Activated B cell treated with CpG ODN at 0.5 μM for 24 hours (primary cell): ENCODE measurements at regions of chr16 and their contacts with region 1.

Region 1: DNA sequence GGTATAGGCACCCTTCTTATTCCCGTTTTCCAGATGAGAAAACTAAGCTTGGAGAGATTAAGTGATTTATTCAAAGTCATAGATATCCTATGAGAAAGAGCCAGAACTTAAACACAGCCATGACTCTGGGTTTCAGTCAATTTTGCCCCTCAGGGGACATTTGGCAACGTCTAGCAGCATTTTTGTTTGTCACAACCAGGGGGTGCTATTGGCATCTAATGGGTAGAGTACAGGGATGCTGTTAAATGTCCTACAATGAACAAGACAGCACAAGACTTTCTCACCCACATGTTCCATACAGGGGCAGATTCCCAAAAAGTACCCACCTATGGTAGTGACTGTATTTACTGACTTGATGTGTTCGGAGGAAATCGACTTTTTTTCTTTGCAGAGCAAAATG is 4.8 kb upstream of the SHISA9 start:
- DNase-seq: no peak
- ATAC-seq: no peak
- H3K4me3 Mint-ChIP-seq: no peak overlapping the region
- H3K27ac Mint-ChIP-seq: no peak overlapping the region
- H3K4me1 Mint-ChIP-seq: peaks cover 1% of the 10 kb centered on the region
- H3K27me3 Mint-ChIP-seq: peaks cover 38% of the 10 kb centered on the region
- CTCF ChIP-seq: no peak

Region 2: DNA sequence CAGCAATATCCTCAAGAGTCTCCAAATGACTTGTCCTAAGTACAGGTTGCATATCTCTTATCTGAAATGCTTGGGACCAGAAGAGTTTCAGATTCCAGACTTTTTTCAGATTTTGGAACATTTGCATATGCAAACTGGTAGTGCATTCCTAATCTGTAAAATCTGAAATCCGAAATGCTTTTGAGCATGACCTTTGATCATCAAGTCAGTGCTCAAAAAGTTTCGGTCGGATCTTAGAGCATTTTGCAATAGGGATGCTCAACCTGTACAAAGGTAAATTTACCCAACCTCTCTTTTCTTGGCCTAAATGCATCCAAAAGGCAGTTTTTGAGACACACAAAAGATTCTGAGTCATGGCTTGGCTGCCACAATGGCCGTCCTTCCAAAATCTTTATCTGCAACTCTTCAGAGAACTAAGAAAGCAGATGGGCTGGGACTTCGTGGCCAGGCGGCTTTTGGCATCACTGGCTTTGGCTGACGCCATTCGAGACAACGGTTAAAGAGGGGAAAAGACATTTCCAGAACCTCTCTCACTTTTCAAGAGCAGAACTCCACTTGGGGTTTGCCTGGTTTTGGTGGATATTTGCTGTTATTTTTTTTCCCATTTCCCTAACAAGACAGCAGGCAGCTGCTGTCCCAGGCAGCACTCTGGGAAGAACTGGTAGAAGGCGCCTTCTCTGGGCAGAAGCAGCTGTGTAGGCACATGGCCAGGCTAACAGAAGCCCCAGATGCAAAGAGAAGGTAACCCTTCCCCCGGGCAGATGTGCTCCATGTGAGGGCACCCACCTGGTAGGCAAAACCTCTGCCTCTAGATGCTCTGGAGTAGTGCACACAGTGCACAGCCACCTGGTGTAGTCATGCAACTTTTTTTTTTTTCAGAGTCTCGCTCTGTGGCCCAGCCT is 101.8 kb before region 1 on chr16:
- CTCF ChIA-PET with region 1: no interaction called
- POLR2A ChIA-PET with region 1: no interaction called
- intact Hi-C with region 1: no loop called
- DNase-seq: no peak
- ATAC-seq: no peak
- H3K4me3 Mint-ChIP-seq: no peak overlapping the region
- H3K27ac Mint-ChIP-seq: no peak overlapping the region
- H3K4me1 Mint-ChIP-seq: no peaks in the 10 kb centered on the region
- H3K27me3 Mint-ChIP-seq: no peaks in the 10 kb centered on the region
- CTCF ChIP-seq: no peak

Region 3: DNA sequence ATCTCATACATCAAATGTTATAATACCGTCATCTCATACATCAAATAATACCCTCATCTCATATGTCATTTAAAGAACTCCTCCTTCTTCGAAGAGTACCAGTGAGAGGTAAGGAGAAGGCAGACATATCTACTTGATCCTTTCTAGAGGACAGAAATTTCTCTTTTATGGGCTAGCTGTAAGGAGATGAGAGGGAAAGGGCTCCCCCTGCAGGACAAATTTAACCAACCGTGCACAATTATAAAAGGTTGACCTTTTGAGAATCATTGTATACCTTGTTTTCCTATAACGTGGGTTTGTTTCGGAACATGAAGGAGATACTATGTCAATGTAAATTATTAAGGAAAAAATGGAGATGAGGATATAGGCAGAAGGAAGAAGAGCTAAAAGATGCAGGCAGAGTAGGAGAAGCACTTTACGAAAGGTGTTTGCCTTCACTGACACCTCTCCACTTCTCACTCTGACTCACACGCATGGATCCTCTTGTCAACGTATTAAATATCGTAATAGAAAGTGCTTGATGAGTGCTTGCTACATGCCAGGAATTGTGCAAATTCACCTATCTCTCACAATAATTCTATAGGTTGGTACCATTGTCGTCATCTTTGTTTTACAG is 557.5 kb after region 1 on chr16:
- CTCF ChIA-PET with region 1: no interaction called
- POLR2A ChIA-PET with region 1: no interaction called
- intact Hi-C with region 1: loop called (anchors 1 kb)
- DNase-seq: no peak
- ATAC-seq: no peak
- H3K4me3 Mint-ChIP-seq: no peak overlapping the region
- H3K27ac Mint-ChIP-seq: no peak overlapping the region
- H3K4me1 Mint-ChIP-seq: no peaks in the 10 kb centered on the region
- H3K27me3 Mint-ChIP-seq: no peaks in the 10 kb centered on the region
- CTCF ChIP-seq: no peak